ENCODE measurements at regions of chr5 and their contacts with region 1.

Region 1: DNA sequence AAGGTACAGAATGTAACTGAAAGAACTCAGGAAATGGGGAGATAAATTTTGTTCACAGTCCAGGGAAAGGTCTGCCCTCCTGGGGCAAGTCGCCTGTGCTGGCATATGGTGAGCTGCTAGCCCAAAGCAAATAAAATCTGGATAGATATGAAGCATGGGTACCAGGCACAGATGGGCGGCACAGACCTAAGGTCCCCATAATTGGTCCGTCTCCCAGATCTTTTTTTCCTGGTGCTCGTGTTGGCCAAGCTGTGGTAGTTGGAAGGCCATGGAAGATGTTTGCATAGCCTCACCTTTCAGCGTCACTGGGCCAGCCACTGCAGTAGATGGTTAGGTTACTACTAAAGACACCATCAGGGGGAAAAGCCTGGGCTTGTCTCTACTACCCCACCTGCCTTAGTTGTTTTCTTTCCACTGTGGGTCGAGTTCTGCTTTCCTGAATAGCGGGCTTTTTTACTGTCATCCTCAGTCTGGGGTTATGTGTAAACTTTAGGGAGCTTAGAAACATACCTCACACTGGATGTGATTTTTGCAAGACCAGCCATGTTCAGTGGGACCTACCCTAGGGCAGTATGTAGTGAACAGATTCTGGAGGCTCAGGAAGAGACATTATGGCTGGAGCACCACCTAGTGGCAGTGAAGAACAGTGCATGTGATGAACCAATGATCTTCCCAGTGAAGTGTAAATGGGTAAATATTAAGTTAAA is 24.2 kb upstream of the GLRX start:
- DNase-seq: peak; percentile 59 to 81 (median 70)
- H3K4me3 ChIP-seq: no peak overlapping the region
- H3K27ac ChIP-seq: no peak overlapping the region
- H3K4me1 ChIP-seq: no peaks in the 10 kb centered on the region
- H3K27me3 ChIP-seq: no peaks in the 10 kb centered on the region
- CTCF ChIP-seq: peak; percentile 72 to 93 (median 93)
- EP300 ChIP-seq: no peak
- POLR2A ChIP-seq: no peak

Region 2: GRCh38 chr5:95655575-95655974 is 191.1 kb before region 1 on chr5:
- intact Hi-C with region 1: loop called in 1 of 4 experiments (anchors 5 kb)
- DNase-seq: no peak
- H3K4me3 ChIP-seq: no peak overlapping the region
- H3K27ac ChIP-seq: no peak overlapping the region
- H3K4me1 ChIP-seq: no peaks in the 10 kb centered on the region
- H3K27me3 ChIP-seq: no peaks in the 10 kb centered on the region
- CTCF ChIP-seq: no peak
- EP300 ChIP-seq: no peak
- POLR2A ChIP-seq: no peak

Region 3: DNA sequence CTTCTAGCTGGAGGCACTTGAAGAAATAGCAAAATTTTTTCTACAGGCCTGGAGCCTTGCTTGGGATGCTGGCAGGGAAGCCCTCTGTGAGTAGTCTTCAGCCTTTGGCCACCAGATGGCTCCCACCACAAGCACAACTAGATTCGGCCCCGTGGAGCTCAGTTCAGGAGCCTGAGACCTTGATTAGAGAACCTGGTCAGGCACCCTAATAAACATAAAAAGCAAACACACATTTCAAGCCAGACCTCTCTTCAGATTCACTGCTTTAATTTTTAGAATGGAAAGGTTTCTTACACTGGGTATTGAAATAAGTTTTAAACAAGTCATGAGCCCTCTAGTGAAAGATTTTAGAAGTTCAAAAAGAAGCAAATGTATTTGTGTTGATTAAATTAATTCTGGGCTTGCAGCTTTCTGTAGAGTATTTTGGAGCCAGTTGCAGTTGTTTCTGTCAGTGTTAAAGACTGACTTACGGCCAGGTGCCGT is 65.6 kb before region 1 on chr5:
- intact Hi-C with region 1: loop called (anchors 2 to 10 kb)
- DNase-seq: peak; percentile 72 to 83 (median 78)
- H3K4me3 ChIP-seq: no peak overlapping the region
- H3K27ac ChIP-seq: peak overlapping the region in 1 of 2 donors; percentile 1
- H3K4me1 ChIP-seq: peaks cover 16% of the 10 kb centered on the region
- H3K27me3 ChIP-seq: no peaks in the 10 kb centered on the region
- CTCF ChIP-seq: peak; percentile 65 to 83 (median 78)
- EP300 ChIP-seq: no peak
- POLR2A ChIP-seq: no peak

Region 4: DNA sequence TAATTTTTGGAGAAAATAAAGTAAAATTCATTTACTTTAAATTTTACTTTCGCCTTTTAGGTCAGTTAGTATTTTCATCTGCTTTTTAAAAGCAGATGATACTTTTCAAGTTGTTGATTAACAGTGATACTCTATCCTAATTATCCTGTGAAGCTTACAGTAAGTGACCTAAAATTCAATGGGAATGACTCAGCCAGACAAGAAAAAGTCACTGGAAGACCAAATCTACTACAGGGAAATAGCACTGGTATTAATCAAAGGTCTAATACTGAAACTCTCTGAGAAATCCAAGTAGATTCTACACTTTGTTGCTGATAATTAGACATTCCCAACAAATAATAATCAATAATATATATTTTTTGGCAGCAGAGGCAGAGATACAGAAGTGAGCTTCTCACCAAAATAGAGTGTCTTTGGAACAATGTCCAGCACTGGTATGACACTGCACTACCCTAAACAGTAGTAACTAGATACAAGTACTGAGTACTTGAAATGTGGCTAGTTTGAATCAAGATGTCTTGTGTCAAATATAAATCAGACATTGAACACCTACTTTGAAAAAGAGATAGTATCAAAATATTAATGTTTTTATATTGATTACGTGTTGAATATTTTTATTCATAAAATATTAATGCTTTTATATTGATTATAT is 137.7 kb after region 1 on chr5:
- intact Hi-C with region 1: no loop called
- DNase-seq: no peak
- H3K4me3 ChIP-seq: no peak overlapping the region
- H3K27ac ChIP-seq: no peak overlapping the region
- H3K4me1 ChIP-seq: no peaks in the 10 kb centered on the region
- H3K27me3 ChIP-seq: no peaks in the 10 kb centered on the region
- CTCF ChIP-seq: no peak
- EP300 ChIP-seq: no peak
- POLR2A ChIP-seq: no peak